ENCODE measurements at regions of chr6 and their contacts with region 1.

Region 1: DNA sequence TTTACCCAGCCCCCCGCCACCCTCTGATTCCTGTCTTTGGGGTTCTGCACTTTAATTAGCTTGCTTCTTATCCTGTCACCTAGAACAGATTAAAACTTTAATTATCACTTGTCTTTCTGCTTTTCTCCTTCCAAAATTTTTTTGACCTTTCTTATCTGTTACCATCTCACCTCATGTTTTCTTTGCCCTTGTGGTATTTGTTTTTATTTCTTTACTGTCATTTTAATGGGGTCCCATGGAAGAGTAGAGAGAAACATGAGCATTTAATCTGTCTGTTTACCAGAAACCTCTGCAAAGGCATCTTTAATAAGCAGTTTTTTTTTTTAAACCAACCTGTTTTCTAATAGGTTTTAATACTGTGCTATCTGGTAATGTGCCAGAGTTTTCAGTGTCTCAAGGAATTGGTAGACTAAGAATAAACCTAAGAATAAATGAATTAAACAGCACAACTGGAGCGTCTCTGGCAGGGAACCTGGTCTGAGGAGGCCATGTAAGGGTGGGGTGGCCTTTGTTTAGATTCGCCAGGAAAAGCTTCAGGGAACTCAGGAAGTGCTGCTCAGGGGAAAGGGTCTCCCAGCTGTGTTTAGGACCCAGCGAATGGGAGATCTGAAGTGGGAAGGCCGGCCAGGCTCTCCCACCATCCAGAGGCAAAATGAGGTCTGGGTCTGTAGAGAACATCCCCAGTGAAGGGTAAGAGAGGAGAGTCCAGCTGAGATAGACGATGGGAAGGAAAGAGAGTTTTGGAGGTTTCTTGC is 69.8 kb downstream of the ARID1B start:
- DNase-seq: no peak
- H3K4me3 ChIP-seq: no peak overlapping the region
- H3K27ac ChIP-seq: no peak overlapping the region
- H3K4me1 ChIP-seq: peaks cover 4 to 13% of the 10 kb centered on the region in 2 donors
- H3K27me3 ChIP-seq: no peaks in the 10 kb centered on the region
- CTCF ChIP-seq: no peak
- POLR2A ChIP-seq: no peak

Region 2: DNA sequence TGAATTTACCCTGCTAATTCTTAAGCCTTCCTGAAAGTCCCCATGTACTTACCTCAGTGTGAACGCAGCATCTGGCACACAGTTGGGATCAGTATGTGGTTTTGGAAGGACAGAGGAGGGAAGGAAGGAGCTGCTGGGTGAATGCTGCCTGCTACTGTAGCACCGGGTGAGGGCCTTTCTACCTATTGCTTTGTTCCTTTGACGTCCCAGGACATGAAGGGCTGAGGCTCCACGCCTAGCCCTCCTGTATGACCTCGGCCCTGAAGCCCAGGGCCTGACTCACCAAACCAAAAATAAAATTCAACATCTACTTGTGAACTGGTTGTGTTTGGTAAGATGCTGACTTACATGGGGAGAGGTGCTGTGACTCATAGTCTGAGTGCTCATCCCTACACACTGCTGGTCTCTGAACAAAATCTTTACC is 18.7 kb before region 1 on chr6:
- intact Hi-C with region 1: loop called (anchors 1 kb)
- DNase-seq: no peak
- H3K4me3 ChIP-seq: no peak overlapping the region
- H3K27ac ChIP-seq: peak overlapping the region; percentile 68 to 72
- H3K4me1 ChIP-seq: peaks cover 4 to 15% of the 10 kb centered on the region in 2 donors
- H3K27me3 ChIP-seq: no peaks in the 10 kb centered on the region
- CTCF ChIP-seq: no peak
- POLR2A ChIP-seq: no peak